Tibial artery (tissue), 4 donors: ENCODE measurements at regions of chr17 and their contacts with region 1.

Region 1: GRCh38 chr17:79082311-79083190 is 7.9 kb downstream of the ENGASE start:
- DNase-seq: no peak
- H3K4me3 ChIP-seq: no peak overlapping the region
- H3K27ac ChIP-seq: no peak overlapping the region
- H3K4me1 ChIP-seq: peaks cover 0 to 4% (median 0%) of the 10 kb centered on the region in 4 donors
- H3K27me3 ChIP-seq: no peaks in the 10 kb centered on the region
- CTCF ChIP-seq: peak; percentile 82 to 86

Region 2: DNA sequence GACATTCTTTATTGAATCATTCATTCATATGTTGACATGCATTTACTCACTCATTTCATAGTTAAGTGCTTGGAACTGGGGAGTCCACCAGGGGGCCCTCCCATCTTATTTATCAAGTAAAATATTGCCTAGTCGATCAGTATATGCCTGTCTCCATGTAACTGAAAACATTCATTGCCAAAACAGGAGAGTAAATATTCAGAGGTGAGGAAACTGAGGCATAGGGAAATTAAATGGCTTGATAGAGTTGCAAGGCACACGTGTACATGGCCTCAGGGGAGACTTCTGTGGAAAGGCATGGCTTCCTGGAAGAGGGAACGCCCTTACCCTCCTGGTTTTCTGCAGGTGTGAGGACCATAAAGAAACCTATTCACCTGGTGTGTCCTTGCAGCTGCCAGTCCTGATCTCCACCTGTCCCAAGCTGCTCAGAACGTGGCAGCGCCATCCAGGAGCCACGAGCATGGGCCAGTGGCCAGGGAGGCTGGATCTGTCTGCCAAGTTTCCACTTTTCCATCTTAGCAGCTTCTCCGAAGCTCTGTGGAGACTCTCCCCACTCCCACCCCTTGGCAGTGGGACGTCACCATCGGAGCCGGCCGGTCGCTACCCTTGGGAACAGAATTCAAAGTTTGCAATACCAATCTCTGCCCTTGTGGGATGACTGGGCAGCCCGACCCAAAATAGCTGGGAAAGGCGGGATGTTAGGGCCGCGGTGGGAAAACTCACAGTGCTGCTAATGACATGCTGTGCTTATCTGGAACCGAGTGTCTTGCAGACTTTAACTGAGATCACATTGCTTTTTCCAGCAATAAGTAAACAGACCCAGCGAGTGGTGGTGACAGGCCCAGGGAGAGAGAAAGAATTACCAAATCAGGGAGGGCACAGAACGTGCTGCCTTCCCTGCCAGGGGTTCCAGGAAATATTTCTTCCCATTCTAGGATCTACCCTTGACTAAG is 62.6 kb before region 1 on chr17:
- intact Hi-C with region 1: loop called (anchors 5 kb)
- DNase-seq: peak; percentile 91 to 97
- H3K4me3 ChIP-seq: no peak overlapping the region
- H3K27ac ChIP-seq: peak overlapping the region; percentile 96
- H3K4me1 ChIP-seq: peaks cover 7 to 48% (median 43%) of the 10 kb centered on the region in 4 donors
- H3K27me3 ChIP-seq: no peaks in the 10 kb centered on the region
- CTCF ChIP-seq: peak; percentile 77 to 87

Region 3: GRCh38 chr17:79045842-79046196 is 36.7 kb before region 1 on chr17:
- intact Hi-C with region 1: loop called (anchors 2 kb)
- DNase-seq: peak; percentile 68 to 88
- H3K4me3 ChIP-seq: no peak overlapping the region
- H3K27ac ChIP-seq: peak overlapping the region; percentile 41 to 76
- H3K4me1 ChIP-seq: peaks cover 0 to 52% (median 39%) of the 10 kb centered on the region in 4 donors
- H3K27me3 ChIP-seq: no peaks in the 10 kb centered on the region
- CTCF ChIP-seq: peak; percentile 94 to 97